ENCODE measurements at regions of chr9 and their contacts with region 1.

Region 1: DNA sequence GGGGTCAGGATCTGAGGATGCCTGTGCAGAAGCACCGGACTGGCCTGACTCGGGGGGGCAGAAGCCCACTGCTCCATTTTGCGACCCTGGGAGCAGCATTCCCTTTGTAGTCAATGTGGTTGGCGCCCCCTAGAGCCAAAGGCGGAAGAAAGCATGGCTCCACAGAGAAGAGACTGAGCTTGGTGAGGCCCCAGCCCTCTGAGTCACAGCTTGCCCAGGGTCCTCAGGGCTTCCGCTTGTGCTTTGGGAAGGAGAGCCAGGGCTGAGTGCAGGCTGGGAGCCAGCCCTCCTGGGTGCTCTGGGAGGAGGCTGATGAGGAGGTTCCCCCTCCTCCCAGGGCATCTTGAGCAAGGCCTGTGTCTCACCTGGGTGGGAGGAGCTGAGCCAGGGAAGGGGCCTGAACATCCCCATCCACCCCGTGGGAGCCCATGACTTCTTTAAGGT is 5.5 kb upstream of the AQP3 start:
- DNase-seq: peak; percentile 46
- H3K4me3 ChIP-seq: no peak overlapping the region
- H3K27ac ChIP-seq: no peak overlapping the region
- H3K27me3 ChIP-seq: no peaks in the 10 kb centered on the region
- CTCF ChIP-seq: peak; percentile 89

Region 2: DNA sequence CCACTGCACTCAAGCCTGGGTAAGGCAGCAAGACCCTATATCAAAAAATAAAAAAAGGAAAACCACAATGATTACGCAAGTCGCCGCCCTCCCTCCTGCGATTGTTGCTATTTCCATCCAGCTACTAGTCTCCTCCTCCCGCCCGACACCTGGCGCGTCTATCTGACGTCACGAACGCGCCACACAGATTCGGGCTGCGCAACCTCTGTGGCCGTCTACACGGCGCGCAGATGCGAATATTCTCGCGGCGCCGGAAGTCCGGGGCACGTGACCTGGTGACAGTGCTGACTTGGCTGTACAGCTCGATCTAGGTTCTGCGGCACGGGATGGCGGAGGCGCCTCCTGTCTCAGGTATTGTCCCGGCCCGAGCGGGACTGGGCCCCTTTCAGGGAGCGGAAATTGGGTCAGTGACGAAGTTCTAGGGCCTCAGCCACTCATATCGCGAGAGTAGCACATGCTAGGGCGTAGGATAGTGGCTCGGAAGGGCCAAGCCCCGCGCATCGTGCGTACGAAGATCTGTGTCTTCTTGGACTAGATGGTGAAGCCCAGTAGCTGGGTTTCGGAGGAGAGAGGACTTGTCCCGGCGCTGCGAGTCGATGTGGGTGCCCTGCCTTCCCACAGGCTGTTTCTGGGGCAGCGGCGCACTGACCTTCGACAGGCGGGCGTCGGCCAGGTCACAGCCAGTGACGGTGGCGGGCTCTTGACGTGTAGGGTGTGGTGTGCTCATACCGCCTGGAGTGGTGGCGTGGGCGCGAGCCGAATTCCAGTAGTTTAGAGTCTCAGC is 162.4 kb before region 1 on chr9 and contains the start of gene NFX1:
- CTCF ChIA-PET with region 1: interaction called, 16 read pairs
- POLR2A ChIA-PET with region 1: interaction called, 5 read pairs
- DNase-seq: peak; percentile 97
- H3K4me3 ChIP-seq: peak within 1 kb of the TSS; percentile 97
- H3K27ac ChIP-seq: peak within 1 kb of the TSS; percentile 100
- H3K27me3 ChIP-seq: no peaks in the 10 kb centered on the region
- CTCF ChIP-seq: no peak
- polyA plus RNA-seq, gene NFX1: 35.9 and 39.2 TPM in 2 replicates

Region 3: DNA sequence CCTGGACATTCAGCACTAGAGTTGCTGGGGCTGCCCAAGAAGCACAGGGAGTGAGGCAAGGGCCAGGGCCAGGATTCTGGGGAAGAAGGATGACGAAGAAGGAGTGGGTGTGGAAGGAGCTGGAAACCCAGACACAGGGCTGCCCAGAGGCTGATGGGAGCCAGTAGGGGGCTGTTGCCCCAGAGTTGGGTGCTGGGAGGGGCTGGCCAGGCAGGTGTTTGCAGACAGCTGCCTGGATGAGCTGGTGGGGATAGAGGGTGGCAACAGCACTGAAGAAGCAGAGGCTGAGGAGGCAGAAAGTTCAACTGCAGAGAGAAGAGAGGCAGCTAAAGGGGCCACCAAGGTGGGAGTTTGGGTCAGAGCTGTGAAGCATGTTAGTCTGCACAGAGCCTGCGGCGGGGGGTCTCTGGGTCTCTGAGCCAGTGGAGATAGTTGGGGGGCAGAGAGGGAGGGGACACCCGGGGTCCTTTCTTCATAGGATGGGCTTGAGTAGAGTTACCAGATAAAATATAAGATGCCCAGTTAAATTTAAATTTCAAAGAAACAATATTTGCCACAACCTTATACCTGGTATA is 48.0 kb before region 1 on chr9:
- CTCF ChIA-PET with region 1: interaction called, 19 read pairs
- POLR2A ChIA-PET with region 1: no interaction called
- DNase-seq: no peak
- H3K4me3 ChIP-seq: no peak overlapping the region
- H3K27ac ChIP-seq: no peak overlapping the region
- H3K27me3 ChIP-seq: no peaks in the 10 kb centered on the region
- CTCF ChIP-seq: no peak

Region 4: GRCh38 chr9:33430942-33431341 is 21.9 kb before region 1 on chr9:
- CTCF ChIA-PET with region 1: interaction called, 26 read pairs
- POLR2A ChIA-PET with region 1: no interaction called
- DNase-seq: no peak
- H3K4me3 ChIP-seq: no peak overlapping the region
- H3K27ac ChIP-seq: no peak overlapping the region
- H3K27me3 ChIP-seq: peaks cover 17% of the 10 kb centered on the region
- CTCF ChIP-seq: no peak

Region 5: GRCh38 chr9:33466565-33467495 is 14.0 kb after region 1 on chr9:
- CTCF ChIA-PET with region 1: interaction called, 47 read pairs
- POLR2A ChIA-PET with region 1: interaction called, 5 read pairs
- DNase-seq: no peak
- H3K4me3 ChIP-seq: no peak overlapping the region
- H3K27ac ChIP-seq: no peak overlapping the region
- H3K27me3 ChIP-seq: no peaks in the 10 kb centered on the region
- CTCF ChIP-seq: peak; percentile 98

Region 6: DNA sequence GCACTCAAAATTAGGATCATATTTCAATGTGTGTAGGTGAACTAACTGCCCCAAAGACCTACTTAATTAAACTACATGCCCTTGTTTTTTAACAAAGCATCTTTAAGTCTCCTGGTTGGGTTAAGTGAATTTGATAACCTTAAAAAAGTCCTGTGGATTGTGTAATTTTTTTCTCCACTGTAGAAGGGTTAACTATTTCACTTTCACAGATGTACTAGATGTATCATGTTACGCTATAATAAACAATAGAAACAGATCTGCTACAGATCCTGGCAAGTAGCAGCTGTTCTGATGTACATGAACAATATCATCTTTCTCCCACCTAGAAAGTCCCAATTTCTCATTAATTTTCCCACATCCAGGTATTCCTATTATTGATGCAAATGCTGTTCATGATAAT is 857.4 kb after region 1 on chr9:
- CTCF ChIA-PET with region 1: no interaction called
- POLR2A ChIA-PET with region 1: no interaction called
- DNase-seq: no peak
- H3K4me3 ChIP-seq: no peak overlapping the region
- H3K27ac ChIP-seq: no peak overlapping the region
- H3K27me3 ChIP-seq: no peaks in the 10 kb centered on the region
- CTCF ChIP-seq: no peak

Measured in AG04450 (cell line).